AG04449 (cell line): ENCODE measurements at regions of chr1 and their contacts with region 1.

Region 1: DNA sequence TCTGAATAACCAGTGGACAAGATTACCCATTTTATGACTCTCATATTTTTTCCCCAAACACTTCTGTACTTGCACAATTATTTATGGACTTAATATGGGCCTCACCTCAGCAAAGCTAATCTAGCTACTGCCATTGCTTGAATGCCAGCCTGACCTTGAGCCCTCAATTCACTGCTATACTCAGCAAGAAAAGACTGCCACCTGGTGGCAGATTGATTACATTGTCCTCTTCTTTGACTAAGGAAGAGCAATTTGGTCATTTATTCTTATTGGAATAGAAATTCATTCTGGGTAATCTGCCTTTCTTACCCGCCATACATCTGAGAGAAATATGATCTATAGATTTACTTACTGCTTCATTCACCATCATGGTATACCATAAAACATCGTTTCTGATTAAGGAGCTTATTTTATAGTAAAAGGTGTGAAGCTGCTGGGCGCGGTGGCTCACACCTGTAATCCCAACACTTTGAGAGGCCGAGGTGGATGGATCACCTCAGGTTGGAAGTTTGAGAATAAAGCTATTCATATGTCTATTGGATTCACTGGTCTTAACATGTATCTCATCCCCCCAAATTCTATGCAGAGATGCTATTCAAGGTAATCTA is 32.9 kb upstream of the DIPK1A start:
- DNase-seq: peak; percentile 46
- H3K4me3 ChIP-seq: no peak overlapping the region
- CTCF ChIP-seq: peak; percentile 55

Region 2: DNA sequence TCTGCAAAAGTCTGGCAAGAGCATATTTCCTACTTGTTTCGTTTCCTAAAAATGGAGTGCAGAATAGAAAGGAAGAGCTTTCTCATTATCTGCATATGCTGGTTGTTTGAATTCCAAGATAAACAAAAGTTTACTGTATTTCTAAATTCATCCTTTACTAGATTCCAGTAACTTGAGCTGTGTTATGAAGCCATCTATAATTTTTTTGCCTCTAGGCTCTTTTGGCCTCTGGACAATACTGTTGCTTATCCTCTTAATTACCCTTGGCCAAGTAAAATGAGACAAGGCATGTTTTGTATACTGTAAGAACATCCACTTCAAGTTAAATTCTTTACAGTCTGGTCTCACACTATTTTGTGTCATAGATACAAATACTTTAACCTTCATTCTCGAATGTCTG is 1543.9 kb before region 1 on chr1:
- CTCF ChIA-PET with region 1: no interaction called
- POLR2A ChIA-PET with region 1: no interaction called
- DNase-seq: peak; percentile 5
- H3K4me3 ChIP-seq: no peak overlapping the region
- CTCF ChIP-seq: no peak

Region 3: GRCh38 chr1:92837062-92837461 is 157.1 kb before region 1 on chr1:
- CTCF ChIA-PET with region 1: interaction called, 28 read pairs
- POLR2A ChIA-PET with region 1: interaction called, 4 read pairs
- DNase-seq: no peak
- H3K4me3 ChIP-seq: no peak overlapping the region
- CTCF ChIP-seq: no peak

Region 4: GRCh38 chr1:92877792-92878191 is 116.4 kb before region 1 on chr1:
- CTCF ChIA-PET with region 1: interaction called, 27 read pairs
- POLR2A ChIA-PET with region 1: no interaction called
- DNase-seq: no peak
- H3K4me3 ChIP-seq: no peak overlapping the region
- CTCF ChIP-seq: no peak

Region 5: DNA sequence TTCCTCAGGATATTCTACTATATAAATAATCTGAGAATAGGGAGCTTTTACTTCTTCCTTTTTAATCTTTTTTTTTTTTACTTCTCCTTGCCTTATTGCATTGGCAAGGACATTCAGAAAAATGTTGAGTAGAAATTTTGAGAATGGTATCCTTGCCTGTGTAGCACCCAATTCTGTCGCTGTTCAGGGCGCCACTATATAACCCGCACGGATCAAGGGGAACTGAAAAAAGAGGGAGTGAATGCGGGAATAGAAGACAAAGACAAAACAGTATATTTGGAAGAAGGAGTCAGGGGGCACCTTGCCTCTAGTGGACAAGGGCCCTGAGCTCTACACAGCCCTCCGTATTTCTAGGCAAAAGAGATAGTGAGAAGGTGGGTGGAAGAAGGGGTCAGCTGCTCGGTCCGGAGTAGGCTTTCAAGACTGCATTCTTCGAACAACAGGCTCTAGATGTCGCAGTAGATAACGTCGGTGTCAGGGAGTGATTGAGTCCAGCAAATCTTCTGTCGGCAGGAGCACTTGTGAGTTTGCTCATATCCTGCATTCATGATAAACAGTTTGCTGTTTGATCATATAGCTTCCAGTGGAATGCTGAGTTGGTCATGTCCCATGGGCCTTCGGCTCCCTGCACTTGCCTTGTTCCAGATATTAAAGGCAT is 69.8 kb before region 1 on chr1:
- CTCF ChIA-PET with region 1: interaction called, 12 read pairs
- POLR2A ChIA-PET with region 1: no interaction called
- DNase-seq: no peak
- H3K4me3 ChIP-seq: no peak overlapping the region
- CTCF ChIP-seq: no peak

Region 6: GRCh38 chr1:92968138-92969032 is 25.8 kb before region 1 on chr1:
- CTCF ChIA-PET with region 1: interaction called, 52 read pairs
- POLR2A ChIA-PET with region 1: no interaction called
- DNase-seq: no peak
- H3K4me3 ChIP-seq: no peak overlapping the region
- CTCF ChIP-seq: peak; percentile 31

Region 7: GRCh38 chr1:93007941-93008577 is 13.8 kb after region 1 on chr1:
- CTCF ChIA-PET with region 1: interaction called, 57 read pairs
- POLR2A ChIA-PET with region 1: no interaction called
- DNase-seq: no peak
- H3K4me3 ChIP-seq: no peak overlapping the region
- CTCF ChIP-seq: no peak

Region 8: GRCh38 chr1:93155335-93155734 is 161.1 kb after region 1 on chr1:
- CTCF ChIA-PET with region 1: no interaction called
- POLR2A ChIA-PET with region 1: no interaction called
- DNase-seq: no peak
- H3K4me3 ChIP-seq: no peak overlapping the region
- CTCF ChIP-seq: no peak

Region 9: DNA sequence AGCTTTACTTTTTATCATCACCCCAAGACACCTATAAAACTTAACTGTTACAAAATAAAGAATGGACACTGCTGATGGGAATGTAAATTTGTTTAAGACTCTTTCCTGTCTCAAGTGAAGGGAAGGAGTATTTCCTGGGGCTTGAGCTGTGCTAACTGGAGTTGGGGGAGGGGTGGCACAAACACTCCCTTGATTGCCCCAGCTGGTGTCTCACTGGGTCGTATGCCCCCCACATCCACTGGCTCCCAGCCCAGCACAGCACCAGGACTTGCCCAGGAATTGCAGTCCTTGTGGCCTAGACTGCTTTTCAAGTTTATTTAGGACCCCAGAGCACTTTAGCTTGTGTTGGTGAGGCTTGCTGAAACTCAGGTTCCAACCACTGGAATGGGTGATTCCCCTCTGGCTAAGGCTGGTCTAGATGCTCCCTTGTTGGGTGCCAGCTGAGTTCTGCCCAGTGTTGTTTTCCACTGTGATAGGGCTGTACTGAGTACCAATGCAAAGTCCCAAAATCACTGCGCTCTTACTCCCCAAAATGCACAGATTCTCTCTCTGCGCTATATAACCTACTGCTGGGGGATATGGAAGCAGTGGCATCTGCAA is 302.4 kb after region 1 on chr1:
- CTCF ChIA-PET with region 1: no interaction called
- POLR2A ChIA-PET with region 1: no interaction called
- DNase-seq: no peak
- H3K4me3 ChIP-seq: no peak overlapping the region
- CTCF ChIP-seq: no peak